ENCODE measurements at regions of chr7 and their contacts with region 1.

Region 1: DNA sequence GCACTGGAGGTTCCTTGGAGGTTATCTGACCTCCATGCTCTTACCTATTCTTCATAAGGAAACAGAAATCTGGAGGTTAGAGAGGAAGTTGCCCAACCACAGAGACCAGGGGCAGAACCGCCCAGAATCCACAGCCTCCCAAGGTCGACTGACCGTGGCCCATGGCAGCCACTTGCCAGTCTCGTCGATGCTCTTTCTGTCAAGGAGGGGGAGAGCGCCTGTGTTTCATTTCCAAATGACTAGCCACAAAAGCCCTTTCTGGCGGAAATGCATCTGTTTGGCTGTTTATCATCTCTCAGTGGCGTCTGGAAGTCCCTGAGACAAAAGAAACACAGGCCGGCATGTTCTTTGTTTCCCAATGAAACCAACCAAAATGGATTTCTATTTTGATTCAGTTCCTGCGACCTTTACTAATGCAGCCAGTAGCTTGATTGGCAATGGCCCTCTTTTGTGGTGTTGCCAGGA is 2.9 kb downstream of the RAMP3 start:
- DNase-seq: no peak
- ATAC-seq: peak in 1 of 2 donors; percentile 30
- H3K4me3 ChIP-seq: peak overlapping the region in 1 of 4 donors; percentile 16
- H3K27ac ChIP-seq: peak overlapping the region in 1 of 4 donors; percentile 22
- H3K4me1 ChIP-seq: no peaks in the 10 kb centered on the region
- H3K27me3 ChIP-seq: peaks cover 4 to 12% (median 7%) of the 10 kb centered on the region in 3 donors
- CTCF ChIP-seq: no peak
- POLR2A ChIP-seq: no peak

Region 2: DNA sequence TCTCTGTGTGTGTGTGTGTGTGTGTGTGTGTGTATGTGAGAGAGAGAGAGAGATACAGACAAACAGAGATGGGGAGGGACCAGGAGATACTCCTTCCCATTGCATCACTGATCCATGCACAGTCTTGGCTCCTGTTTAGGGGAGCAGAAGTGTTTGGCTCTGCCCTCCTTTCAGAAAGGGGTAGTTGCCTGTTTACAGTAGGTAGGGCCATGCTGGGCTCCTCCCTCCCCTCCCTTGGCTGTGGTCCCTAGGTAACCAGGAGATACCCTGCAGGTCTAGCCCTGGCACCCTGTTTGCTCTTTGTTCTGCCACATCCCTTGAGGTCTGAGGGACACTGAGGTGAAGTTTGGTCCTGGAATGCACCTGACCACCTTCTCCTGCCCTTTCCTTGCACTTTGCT is 92.4 kb after region 1 on chr7:
- in situ Hi-C with region 1: loop called in 2 of 4 experiments (anchors 5 to 10 kb)
- intact Hi-C with region 1: no loop called
- DNase-seq: no peak
- ATAC-seq: no peak
- H3K4me3 ChIP-seq: no peak overlapping the region
- H3K27ac ChIP-seq: no peak overlapping the region
- H3K4me1 ChIP-seq: no peaks in the 10 kb centered on the region
- H3K27me3 ChIP-seq: peaks cover 0 to 2% (median 0%) of the 10 kb centered on the region in 3 donors
- CTCF ChIP-seq: no peak
- POLR2A ChIP-seq: no peak

Region 3: DNA sequence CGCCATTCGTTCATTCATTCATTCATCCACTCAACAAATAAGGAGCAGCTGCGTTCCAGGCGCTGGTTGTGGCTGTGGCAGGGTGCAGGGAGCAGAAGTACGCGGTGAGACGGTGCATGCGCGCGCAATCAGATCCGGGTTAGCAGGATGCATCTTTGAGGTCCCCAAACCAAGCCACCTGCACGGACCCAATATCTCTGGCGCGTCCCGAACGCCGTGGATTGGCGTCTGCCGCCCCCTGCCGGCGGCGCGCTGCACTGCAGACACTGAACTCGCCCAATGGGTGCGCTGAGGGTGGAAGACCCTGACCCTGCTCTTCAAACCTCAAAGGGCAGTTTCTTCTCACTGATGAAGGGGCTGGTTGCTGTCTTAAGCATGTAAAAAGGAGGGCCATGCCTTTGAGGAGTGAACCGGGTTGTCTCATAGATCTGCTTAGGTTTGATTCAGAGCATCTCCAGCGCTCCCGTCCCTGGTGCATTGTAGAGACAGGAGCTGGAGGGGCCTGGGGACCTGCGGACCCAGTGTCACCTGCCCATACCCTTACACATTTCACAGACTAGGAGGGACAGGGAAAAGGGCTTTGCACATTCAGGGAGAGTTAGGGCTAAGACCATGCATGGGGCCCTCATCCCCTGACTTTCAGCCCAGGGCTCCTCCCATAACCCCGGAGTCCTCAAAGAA is 99.7 kb after region 1 on chr7:
- in situ Hi-C with region 1: loop called in 1 of 4 experiments (anchors 10 kb)
- intact Hi-C with region 1: no loop called
- DNase-seq: peak in 1 of 2 donors; percentile 23
- ATAC-seq: peak; percentile 36 to 56
- H3K4me3 ChIP-seq: no peak overlapping the region
- H3K27ac ChIP-seq: no peak overlapping the region
- H3K4me1 ChIP-seq: no peaks in the 10 kb centered on the region
- H3K27me3 ChIP-seq: no peaks in the 10 kb centered on the region
- CTCF ChIP-seq: peak; percentile 70 to 94 (median 87)
- POLR2A ChIP-seq: no peak

Region 4: GRCh38 chr7:45863715-45864114 is 703.3 kb after region 1 on chr7:
- in situ Hi-C with region 1: loop called (anchors 25 kb)
- intact Hi-C with region 1: loop called (anchors 10 kb)
- DNase-seq: no peak
- ATAC-seq: no peak
- H3K4me3 ChIP-seq: no peak overlapping the region
- H3K27ac ChIP-seq: no peak overlapping the region
- H3K4me1 ChIP-seq: no peaks in the 10 kb centered on the region
- H3K27me3 ChIP-seq: peaks cover 0 to 5% (median 2%) of the 10 kb centered on the region in 3 donors
- CTCF ChIP-seq: no peak
- POLR2A ChIP-seq: no peak

Region 5: GRCh38 chr7:45872116-45873034 is 711.9 kb after region 1 on chr7:
- in situ Hi-C with region 1: loop called (anchors 25 kb)
- intact Hi-C with region 1: no loop called
- DNase-seq: no peak
- ATAC-seq: no peak
- H3K4me3 ChIP-seq: no peak overlapping the region
- H3K27ac ChIP-seq: no peak overlapping the region
- H3K4me1 ChIP-seq: no peaks in the 10 kb centered on the region
- H3K27me3 ChIP-seq: no peaks in the 10 kb centered on the region
- CTCF ChIP-seq: no peak
- POLR2A ChIP-seq: no peak

Measured in gastrocnemius medialis (tissue), 4 donors.